PC-9 (cell line): ENCODE measurements at regions of chr16 and their contacts with region 1.

Region 1: GRCh38 chr16:78375055-78375679 is 275.7 kb downstream of the WWOX start:
- DNase-seq: no peak
- H3K4me3 ChIP-seq: no peak overlapping the region
- H3K27ac ChIP-seq: no peak overlapping the region
- H3K4me1 ChIP-seq: no peaks in the 10 kb centered on the region
- H3K27me3 ChIP-seq: no peaks in the 10 kb centered on the region
- CTCF ChIP-seq: no peak

Region 2: DNA sequence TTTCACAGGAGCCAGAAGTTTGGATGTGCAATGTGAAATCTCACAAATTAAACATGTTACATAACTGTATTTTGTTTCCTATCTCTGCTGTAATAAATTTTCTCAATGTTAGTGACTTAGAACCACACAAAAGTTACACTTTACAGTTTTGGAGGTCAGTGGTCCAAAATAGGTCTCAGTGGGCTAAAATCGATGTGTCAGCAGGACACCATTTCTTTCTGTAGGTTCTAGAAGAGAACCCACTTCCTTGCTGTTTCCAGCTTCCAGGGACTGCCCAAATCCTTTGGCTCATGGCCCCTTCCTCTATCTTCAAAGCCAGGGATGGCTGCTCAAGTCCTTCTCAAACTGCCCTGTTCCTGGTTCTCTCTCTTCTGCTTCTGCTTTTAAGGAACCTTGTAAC is 23.0 kb before region 1 on chr16:
- CTCF ChIA-PET with region 1: interaction called, 11 read pairs
- POLR2A ChIA-PET with region 1: no interaction called
- intact Hi-C with region 1: no loop called
- DNase-seq: no peak
- H3K4me3 ChIP-seq: no peak overlapping the region
- H3K27ac ChIP-seq: no peak overlapping the region
- H3K4me1 ChIP-seq: no peaks in the 10 kb centered on the region
- H3K27me3 ChIP-seq: no peaks in the 10 kb centered on the region
- CTCF ChIP-seq: no peak

Region 3: DNA sequence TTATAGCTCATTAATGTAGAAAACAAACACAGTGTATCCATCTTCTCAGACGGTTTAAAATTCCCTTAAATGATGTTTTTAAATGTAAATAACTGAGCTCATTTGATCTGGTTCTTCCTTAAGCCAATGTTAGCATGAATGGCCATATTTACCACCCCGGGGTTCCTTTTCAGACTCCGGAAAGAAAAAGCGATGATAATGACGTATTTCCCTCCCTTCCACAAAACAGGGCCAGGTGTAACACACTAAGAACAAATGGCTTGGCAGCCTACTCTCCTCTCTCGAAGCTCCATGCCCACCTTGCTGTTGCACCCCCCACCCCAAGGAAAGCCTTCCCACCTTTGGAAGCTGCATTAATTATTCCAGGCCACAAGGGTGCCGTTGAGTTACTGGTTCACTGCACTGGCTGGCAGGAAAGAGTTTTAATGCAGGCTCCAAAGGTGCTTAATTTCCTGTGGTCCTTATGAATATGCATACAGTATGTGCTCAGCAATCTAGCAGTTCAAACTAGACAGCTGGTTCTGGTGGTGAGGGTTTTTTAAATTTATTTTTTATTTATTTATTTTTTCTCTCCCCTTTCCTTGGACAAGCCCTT is 103.2 kb after region 1 on chr16:
- CTCF ChIA-PET with region 1: no interaction called
- POLR2A ChIA-PET with region 1: no interaction called
- intact Hi-C with region 1: no loop called
- DNase-seq: peak in 1 of 2 experiments; percentile 26
- H3K4me3 ChIP-seq: no peak overlapping the region
- H3K27ac ChIP-seq: no peak overlapping the region
- H3K4me1 ChIP-seq: no peaks in the 10 kb centered on the region
- H3K27me3 ChIP-seq: no peaks in the 10 kb centered on the region
- CTCF ChIP-seq: peak; percentile 75

Region 4: DNA sequence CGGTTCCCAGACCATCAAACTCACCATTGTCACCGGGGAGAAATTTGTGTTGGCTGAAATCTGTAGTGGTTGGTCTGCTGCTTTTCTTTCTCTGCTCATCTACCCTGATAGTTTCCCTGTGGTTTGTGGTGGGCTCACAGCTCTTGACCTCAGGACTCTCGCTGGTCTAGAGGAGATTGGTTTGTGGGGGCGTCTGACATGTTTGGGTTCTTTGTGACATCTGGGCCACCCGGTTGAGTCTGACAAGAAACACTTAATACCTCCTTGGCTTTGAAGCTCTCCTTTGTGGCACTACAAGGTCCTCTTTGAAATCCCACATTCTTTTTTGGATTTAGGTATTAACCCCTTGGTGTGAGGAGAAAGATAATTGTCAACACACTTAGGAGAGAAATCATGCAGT is 386.3 kb after region 1 on chr16:
- CTCF ChIA-PET with region 1: no interaction called
- POLR2A ChIA-PET with region 1: no interaction called
- intact Hi-C with region 1: no loop called
- DNase-seq: no peak
- H3K4me3 ChIP-seq: no peak overlapping the region
- H3K27ac ChIP-seq: no peak overlapping the region
- H3K4me1 ChIP-seq: no peaks in the 10 kb centered on the region
- H3K27me3 ChIP-seq: no peaks in the 10 kb centered on the region
- CTCF ChIP-seq: no peak